Posterior vena cava (tissue), 2 donors: ENCODE measurements at regions of chr18 and their contacts with region 1.

Region 1: GRCh38 chr18:77067291-77068061 is 65.1 kb downstream of the MBP start:
- DNase-seq: peak; percentile 91

Region 2: GRCh38 chr18:77101410-77102258 is 34.2 kb after region 1 on chr18:
- intact Hi-C with region 1: loop called in 1 of 2 experiments (anchors 5 kb)
- DNase-seq: peak; percentile 97